Posterior vena cava (tissue), 2 donors: ENCODE measurements at regions of chr2 and their contacts with region 1.

Region 1: DNA sequence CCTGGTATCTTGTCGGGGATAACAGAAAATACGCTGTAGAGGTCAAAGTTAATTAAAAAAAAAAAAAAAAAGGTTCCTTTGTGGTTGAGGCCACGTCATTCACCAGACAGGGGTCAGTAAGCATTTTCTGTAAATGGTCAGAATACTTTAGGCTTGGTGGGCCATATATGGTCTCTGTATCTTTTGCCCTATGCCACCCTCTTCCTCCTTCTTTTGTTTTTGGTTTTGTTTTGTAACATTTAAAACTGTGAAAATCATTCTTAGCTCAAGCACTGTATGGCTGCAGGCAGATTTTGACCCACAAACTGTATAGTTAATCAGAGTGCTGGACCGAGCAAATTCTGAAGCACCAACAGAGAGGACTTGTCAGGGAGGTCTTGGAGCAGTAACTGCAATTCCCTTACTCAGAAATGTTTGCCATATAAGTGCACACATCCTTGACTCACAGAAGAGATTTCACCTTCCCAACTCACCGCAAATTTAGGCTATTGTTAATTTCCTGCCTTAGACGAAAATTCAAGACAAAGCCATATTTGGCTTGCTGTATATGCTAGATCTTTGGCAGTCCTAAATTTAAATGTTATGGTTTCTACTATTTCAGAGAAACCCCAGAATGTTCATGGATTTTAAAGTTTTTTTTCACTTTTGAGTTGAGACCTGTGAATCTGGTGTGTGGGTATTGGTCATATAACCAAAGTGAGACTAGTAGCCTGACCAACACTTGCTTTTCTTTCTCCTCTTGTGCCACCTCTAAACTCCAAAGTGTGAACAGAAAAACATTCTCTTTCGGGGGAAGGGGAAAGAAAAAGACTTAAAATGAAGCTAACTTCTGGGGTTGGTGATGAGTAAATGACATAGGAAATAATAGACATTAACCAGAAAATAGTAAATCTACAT is 65.4 kb downstream of the DOCK10 start:
- DNase-seq: no peak

Region 2: GRCh38 chr2:224930990-224931389 is 45.9 kb before region 1 on chr2:
- intact Hi-C with region 1: loop called in 1 of 2 experiments (anchors 5 kb)
- DNase-seq: no peak